ENCODE measurements at regions of chr4 and their contacts with region 1.

Region 1: DNA sequence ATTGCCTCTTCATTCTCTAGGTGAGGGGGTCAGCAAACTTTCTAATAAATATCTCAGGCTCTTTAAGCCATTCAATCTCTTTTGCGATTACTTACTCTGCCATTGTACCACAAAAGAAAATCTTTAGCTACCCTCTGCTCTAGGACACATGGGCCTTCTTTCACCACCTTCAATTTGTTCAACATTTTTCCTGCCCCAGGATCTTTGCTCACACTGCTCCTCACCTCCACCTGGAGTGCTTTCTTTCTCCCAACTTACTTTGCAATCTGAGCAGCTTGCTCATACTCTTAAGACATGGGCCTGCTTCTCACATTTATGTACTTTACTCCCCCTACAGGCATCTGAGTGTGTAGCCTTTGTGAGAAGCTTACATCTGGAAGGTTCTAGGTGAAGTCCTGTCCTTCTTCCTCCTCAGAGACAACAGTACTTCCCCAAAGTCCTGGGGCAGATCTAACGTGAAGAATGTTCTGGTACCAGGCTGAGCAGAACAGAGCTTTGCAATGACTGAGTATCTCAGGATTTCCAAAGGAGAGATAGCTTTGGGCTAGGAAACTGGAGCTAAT is 55.0 kb upstream of the PRDM5 start:
- DNase-seq: peak in 6 of 9 donors; percentile 6 to 32 (median 26)
- ATAC-seq: peak; percentile 66
- H3K4me3 ChIP-seq: no peak overlapping the region
- H3K4me3 Mint-ChIP-seq: no peak overlapping the region
- H3K27ac ChIP-seq: no peak overlapping the region
- H3K27ac Mint-ChIP-seq: no peak overlapping the region
- H3K4me1 ChIP-seq: no peaks in the 10 kb centered on the region
- H3K4me1 Mint-ChIP-seq: peaks cover 0 to 6% (median 0%) of the 10 kb centered on the region in 7 donors
- H3K27me3 ChIP-seq: no peaks in the 10 kb centered on the region
- H3K27me3 Mint-ChIP-seq: peaks cover 0 to 6% (median 0%) of the 10 kb centered on the region in 5 donors

Region 2: DNA sequence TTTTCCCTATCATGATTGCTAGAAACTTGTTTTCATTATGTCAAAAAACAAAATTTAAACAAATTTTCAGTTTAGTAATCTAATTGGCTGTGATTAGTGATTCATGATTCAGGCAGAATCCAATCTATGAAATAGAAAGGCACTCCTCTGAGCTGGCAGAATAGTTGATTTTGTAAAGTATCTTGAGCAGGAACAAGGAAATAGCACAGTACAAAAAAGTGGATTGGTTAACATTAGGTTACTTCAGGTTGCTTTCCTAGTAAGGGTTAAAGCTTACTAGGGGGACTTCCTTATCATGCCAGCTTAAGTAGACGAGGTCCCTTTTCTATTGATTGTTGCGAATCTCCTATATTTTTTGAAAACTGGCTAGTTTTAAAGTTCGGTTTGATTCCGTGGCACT is 11.6 kb before region 1 on chr4:
- CTCF ChIA-PET with region 1: no interaction called
- POLR2A ChIA-PET with region 1: no interaction called
- intact Hi-C with region 1: no loop called
- DNase-seq: no peak
- ATAC-seq: no peak
- H3K4me3 ChIP-seq: no peak overlapping the region
- H3K4me3 Mint-ChIP-seq: no peak overlapping the region
- H3K27ac ChIP-seq: no peak overlapping the region
- H3K27ac Mint-ChIP-seq: no peak overlapping the region
- H3K4me1 ChIP-seq: no peaks in the 10 kb centered on the region
- H3K4me1 Mint-ChIP-seq: no peaks in the 10 kb centered on the region
- H3K27me3 ChIP-seq: no peaks in the 10 kb centered on the region
- H3K27me3 Mint-ChIP-seq: peaks cover 0 to 11% (median 4%) of the 10 kb centered on the region in 5 donors

Region 3: DNA sequence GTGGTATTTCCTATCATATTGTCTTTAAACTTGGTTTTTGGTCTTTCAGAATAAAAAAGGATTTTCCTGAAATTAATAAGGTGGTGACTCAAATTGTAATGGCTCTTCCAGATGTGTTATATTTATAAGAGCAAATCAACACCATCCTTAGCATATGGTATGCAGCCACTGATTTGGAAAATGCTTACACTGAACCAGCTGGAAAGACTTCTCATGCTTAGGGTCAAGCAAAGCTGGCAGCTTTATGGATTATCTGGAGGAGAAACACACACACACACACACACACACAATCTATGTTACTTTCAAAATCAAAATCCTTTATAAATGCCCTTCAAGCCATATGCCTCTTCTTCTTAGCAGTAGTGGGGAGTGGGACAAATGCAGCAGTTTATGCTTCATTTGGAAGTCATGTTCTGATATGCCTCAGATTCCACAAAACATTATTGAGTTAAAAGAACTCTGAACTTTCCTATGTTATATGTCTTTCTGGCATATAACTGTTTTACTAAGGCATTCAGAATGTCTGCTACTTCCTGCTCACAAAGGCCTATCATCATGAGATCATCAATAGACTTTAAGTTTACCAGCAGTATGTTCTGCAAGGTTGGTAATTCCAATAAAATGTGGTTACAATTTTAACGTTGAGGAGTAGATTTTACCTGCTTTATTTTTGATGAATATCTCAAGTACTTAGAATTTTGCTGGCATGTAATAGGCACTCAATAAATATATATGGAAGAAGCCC is 17.9 kb after region 1 on chr4:
- CTCF ChIA-PET with region 1: interaction called, 5 read pairs
- POLR2A ChIA-PET with region 1: interaction called, 3 read pairs
- intact Hi-C with region 1: loop called in 1 of 2 experiments (anchors 2 kb)
- DNase-seq: no peak
- ATAC-seq: no peak
- H3K4me3 ChIP-seq: no peak overlapping the region
- H3K4me3 Mint-ChIP-seq: no peak overlapping the region
- H3K27ac ChIP-seq: no peak overlapping the region
- H3K27ac Mint-ChIP-seq: no peak overlapping the region
- H3K4me1 ChIP-seq: peaks cover 0 to 10% of the 10 kb centered on the region in 2 donors
- H3K4me1 Mint-ChIP-seq: peaks cover 0 to 29% (median 19%) of the 10 kb centered on the region in 7 donors
- H3K27me3 ChIP-seq: no peaks in the 10 kb centered on the region
- H3K27me3 Mint-ChIP-seq: peaks cover 0 to 4% (median 0%) of the 10 kb centered on the region in 5 donors

Measured in naive thymus-derived CD4-positive, alpha-beta T cell (primary cell).